IMR-90 (cell line): ENCODE measurements at regions of chr3 and their contacts with region 1.

Region 1: DNA sequence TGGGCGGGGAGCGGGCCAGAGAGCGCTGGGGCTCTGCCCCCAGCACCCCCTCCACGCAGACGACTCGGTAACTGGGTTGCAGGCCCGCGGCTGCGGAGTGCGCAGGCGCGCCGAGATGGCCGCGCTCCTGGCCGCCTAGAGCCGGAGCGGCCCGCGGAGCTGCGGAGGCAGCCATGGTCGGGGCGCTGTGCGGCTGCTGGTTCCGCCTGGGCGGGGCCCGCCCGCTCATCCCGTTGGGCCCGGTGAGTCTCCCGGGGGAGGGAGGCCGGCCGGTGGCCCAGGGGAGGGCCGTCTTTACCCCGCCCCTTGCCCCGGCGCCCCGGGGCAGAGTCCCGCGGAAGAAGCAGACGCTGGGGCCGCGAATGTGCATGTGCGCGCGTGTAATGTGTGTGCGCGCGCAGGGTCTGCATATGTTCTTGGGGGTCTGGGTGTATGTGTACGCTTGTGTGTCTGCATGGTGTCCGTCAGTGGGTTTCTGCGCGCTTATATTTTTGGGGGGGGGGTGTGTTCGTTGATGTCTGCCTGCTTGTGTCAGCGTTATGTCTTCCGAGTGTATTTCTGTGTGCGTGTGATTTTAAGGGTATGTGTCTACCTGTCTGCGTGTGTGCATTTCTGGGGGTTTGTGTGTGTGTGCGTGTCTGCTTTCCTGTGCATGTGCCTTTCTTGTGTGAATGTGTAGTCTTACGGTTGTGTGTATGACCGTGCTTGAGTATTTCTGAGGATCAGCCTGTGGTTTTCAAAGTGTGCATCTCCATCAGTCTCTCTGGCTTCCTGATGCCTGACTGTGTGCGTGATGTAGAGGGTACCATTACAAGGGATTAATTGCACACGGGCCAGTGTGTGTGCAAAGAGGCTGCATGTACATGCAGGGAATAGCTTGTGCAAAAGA is at the start of gene ABHD14A:
- DNase-seq: peak; percentile 55
- ATAC-seq: peak; percentile 79
- H3K4me3 ChIP-seq: peak within 1 kb of the TSS; percentile 68
- H3K27ac ChIP-seq: peak within 1 kb of the TSS; percentile 43
- H3K4me1 ChIP-seq: peaks cover 13% of the 10 kb centered on the region
- H3K27me3 ChIP-seq: no peaks in the 10 kb centered on the region
- CTCF ChIP-seq: no peak
- POLR2A ChIP-seq: no peak
- RAD21 ChIP-seq: no peak
- total RNA-seq, gene ABHD14A: 3.1 and 3.4 TPM in 2 replicates

Region 2: DNA sequence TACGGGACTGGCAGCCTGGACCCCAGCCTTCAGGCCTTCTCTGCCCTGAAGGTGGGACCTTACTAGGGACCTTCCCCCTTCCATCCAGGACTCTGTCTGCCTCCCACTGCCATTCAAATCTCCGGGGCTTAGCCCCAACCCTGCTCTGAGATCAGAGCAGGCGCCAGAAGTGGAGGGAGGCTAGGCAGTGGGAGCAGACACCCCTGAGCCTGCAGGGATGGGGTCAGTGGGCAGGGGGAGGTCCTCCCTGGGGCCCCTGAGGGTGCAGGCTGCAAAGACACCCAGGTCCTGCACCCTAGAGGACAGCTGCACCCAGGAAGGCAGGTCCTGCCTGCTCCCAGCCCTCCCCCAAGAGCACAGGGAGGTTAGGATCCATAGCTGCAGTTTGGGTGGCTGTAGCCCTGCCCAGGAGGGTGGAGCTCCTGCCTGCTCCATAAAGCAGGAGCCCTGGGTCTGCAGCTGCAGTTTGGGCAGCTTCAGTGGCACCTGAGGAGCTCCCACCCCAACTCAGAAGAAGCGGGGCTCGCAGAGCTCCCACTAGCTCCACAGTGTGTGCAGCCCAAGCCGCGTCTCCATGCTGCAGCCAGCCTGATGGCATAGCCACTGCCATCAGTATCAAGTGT is 187.2 kb after region 1 on chr3:
- CTCF ChIA-PET with region 1: no interaction called
- POLR2A ChIA-PET with region 1: no interaction called
- dilution Hi-C with region 1: no loop called
- in situ Hi-C with region 1: no loop called
- intact Hi-C with region 1: no loop called
- DNase-seq: no peak
- ATAC-seq: no peak; the same call in 1 of the 2 replicates
- H3K4me3 ChIP-seq: no peak overlapping the region
- H3K27ac ChIP-seq: no peak overlapping the region
- H3K4me1 ChIP-seq: no peaks in the 10 kb centered on the region
- H3K27me3 ChIP-seq: no peaks in the 10 kb centered on the region
- CTCF ChIP-seq: no peak
- POLR2A ChIP-seq: no peak
- RAD21 ChIP-seq: no peak

Region 3: DNA sequence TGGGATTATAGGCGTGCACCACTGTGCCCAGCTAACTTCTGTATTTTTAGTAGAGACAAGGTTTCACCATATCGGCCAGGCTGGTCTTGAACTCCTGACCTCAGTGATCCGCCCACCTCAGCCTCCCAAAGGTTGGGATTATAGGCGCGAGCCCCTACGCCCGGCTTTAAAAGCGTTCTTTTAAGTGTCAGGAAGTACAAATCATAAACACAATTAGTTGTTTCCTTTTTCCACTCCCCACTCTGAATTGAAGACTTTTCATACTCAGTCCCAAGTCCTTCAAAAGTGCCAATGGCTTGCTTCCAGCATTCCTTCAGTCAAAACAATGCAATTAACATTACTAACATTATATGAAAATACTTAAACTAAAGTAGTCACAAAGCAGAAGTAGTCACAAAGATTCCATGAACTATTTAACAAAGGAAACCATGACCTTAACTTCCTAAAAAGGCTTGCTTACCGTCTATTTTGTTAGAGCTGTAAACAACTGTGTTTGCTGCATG is 295.1 kb after region 1 on chr3:
- CTCF ChIA-PET with region 1: no interaction called
- POLR2A ChIA-PET with region 1: interaction called, 19 read pairs
- dilution Hi-C with region 1: no loop called
- in situ Hi-C with region 1: no loop called
- intact Hi-C with region 1: no loop called
- DNase-seq: no peak
- ATAC-seq: no peak; the same call in 1 of the 2 replicates
- H3K4me3 ChIP-seq: no peak overlapping the region
- H3K27ac ChIP-seq: no peak overlapping the region; the same call in 1 of the 2 replicates
- H3K4me1 ChIP-seq: peaks cover 4% of the 10 kb centered on the region; the same call in 1 of the 2 replicates
- H3K27me3 ChIP-seq: no peaks in the 10 kb centered on the region
- CTCF ChIP-seq: no peak
- POLR2A ChIP-seq: no peak
- RAD21 ChIP-seq: no peak